Mammary epithelial cell (primary cell): ENCODE measurements at regions of chr9 and their contacts with region 1.

Region 1: GRCh38 chr9:26744191-26744965 is 148.2 kb downstream of the CAAP1 start:
- DNase-seq: peak; percentile 9
- H3K4me3 ChIP-seq: no peak overlapping the region
- H3K27ac ChIP-seq: no peak overlapping the region
- H3K4me1 ChIP-seq: peaks cover 3% of the 10 kb centered on the region
- H3K27me3 ChIP-seq: no peaks in the 10 kb centered on the region
- CTCF ChIP-seq: peak; percentile 61 to 66

Region 2: GRCh38 chr9:26729187-26729586 is 15.2 kb before region 1 on chr9:
- CTCF ChIA-PET with region 1: no interaction called
- dilution Hi-C with region 1: no loop called
- in situ Hi-C with region 1: no loop called
- intact Hi-C with region 1: no loop called
- DNase-seq: no peak
- H3K4me3 ChIP-seq: no peak overlapping the region
- H3K27ac ChIP-seq: no peak overlapping the region
- H3K4me1 ChIP-seq: no peaks in the 10 kb centered on the region
- H3K27me3 ChIP-seq: peaks cover 5% of the 10 kb centered on the region
- CTCF ChIP-seq: no peak

Region 3: GRCh38 chr9:26856413-26857032 is 112.1 kb after region 1 on chr9:
- CTCF ChIA-PET with region 1: no interaction called
- dilution Hi-C with region 1: no loop called
- in situ Hi-C with region 1: loop called (anchors 5 kb)
- intact Hi-C with region 1: loop called (anchors 1 kb)
- DNase-seq: peak; percentile 55
- H3K4me3 ChIP-seq: no peak overlapping the region
- H3K27ac ChIP-seq: no peak overlapping the region
- H3K4me1 ChIP-seq: no peaks in the 10 kb centered on the region
- H3K27me3 ChIP-seq: no peaks in the 10 kb centered on the region
- CTCF ChIP-seq: peak; percentile 84 to 89

Region 4: DNA sequence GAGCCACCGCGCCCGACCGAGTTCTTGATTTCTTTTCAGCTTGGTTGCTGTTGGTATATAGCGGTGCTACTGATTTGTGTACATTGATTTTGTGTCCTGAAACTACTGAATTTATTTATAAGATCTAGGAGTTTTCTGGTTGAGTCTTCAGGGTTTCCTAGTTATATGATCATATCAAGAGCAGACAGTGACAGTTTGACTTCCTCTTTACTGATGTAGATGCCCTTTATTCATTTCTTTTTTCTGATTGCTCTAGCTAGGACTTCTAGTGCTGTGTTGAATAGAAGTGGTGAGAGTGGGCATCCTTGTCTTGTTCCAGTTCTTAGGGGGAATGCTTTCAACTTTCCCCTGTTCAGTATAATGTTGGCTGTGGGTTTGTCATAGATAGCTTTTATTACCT is 278.5 kb after region 1 on chr9:
- CTCF ChIA-PET with region 1: no interaction called
- dilution Hi-C with region 1: no loop called
- in situ Hi-C with region 1: no loop called
- intact Hi-C with region 1: no loop called
- DNase-seq: no peak
- H3K4me3 ChIP-seq: no peak overlapping the region
- H3K27ac ChIP-seq: no peak overlapping the region
- H3K4me1 ChIP-seq: no peaks in the 10 kb centered on the region
- H3K27me3 ChIP-seq: no peaks in the 10 kb centered on the region
- CTCF ChIP-seq: no peak